ENCODE measurements at regions of chr18 and their contacts with region 1.

Region 1: GRCh38 chr18:8988261-8988871 is 114.1 kb upstream of the NDUFV2 start:
- DNase-seq: peak; percentile 59 to 86
- H3K4me3 ChIP-seq: no peak overlapping the region
- H3K27ac ChIP-seq: no peak overlapping the region
- H3K4me1 ChIP-seq: peaks cover 0 to 8% (median 2%) of the 10 kb centered on the region in 4 donors
- H3K27me3 ChIP-seq: no peaks in the 10 kb centered on the region
- CTCF ChIP-seq: peak in 5 of 7 experiments; percentile 64 to 79 (median 69)
- EP300 ChIP-seq: no peak
- POLR2A ChIP-seq: no peak

Region 2: DNA sequence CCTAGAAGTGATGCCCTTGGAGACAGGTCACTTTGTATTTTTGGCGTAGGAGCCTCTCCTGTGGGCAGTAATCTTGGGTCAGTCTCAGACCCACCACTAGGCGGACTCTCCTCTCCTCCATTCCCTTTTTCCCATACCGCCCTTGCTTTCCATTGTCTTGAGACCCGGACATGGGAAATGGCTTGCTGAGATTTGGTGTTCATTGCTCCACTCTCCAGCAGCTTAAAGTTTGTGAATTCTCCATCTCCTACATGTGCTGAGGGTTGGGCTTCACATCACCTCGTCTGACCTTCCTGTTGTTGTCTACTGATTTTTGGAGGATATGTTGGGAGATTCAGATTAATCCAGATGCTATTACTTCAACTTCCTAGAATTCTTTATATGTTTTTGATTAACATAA is 538.4 kb before region 1 on chr18:
- intact Hi-C with region 1: no loop called
- DNase-seq: no peak
- H3K4me3 ChIP-seq: no peak overlapping the region
- H3K27ac ChIP-seq: no peak overlapping the region
- H3K4me1 ChIP-seq: no peaks in the 10 kb centered on the region
- H3K27me3 ChIP-seq: no peaks in the 10 kb centered on the region
- CTCF ChIP-seq: peak in 2 of 7 experiments; percentile 6 to 20
- EP300 ChIP-seq: no peak
- POLR2A ChIP-seq: no peak

Region 3: DNA sequence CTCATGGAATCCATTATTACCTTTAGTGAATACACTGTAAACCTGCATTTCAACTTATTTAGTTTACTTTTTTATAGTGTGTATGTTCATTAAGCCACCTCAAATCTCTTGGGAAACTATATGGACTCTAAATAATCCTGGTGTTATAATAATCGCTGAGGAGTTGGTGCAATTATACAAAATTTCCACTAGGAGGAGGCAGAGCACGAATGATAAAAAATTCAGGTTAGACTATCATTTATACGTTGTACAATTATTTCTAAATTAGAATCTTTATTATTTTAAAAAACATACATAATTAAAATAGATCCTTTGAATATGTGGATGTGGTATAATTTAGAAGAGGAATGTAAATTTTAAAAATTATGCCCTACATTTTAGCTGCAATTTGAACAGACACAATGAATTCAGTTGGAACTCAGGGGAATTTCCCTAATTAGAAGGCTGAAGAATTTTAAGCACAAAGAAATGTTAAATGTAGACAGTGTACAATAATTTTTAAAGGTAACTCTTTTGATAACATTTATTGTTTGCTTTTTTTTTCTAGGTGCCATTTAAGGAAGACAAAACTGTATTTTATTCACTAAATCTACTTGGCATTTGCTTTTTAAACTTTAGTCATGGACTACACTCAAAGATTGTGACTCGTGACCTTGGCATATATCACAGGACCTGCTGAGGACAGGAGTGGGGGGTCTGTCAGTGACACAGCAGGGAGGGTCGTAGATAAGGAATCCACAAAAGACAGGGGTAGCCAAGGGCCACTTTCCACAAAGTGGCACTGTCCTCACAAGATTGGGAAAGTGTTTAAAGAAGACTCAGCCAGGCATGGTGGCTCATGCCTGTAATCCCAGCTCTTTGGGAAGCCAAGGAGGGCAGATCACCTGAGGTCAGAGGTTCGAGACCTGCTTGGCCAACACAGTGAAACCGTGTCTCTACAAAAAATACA is 333.6 kb before region 1 on chr18:
- intact Hi-C with region 1: loop called (anchors 10 kb)
- DNase-seq: peak in 1 of 2 donors; percentile 51
- H3K4me3 ChIP-seq: no peak overlapping the region
- H3K27ac ChIP-seq: no peak overlapping the region
- H3K4me1 ChIP-seq: peaks cover 0 to 3% (median 0%) of the 10 kb centered on the region in 4 donors
- H3K27me3 ChIP-seq: no peaks in the 10 kb centered on the region
- CTCF ChIP-seq: peak in 5 of 7 experiments; percentile 4 to 81 (median 72)
- EP300 ChIP-seq: no peak
- POLR2A ChIP-seq: no peak